ENCODE measurements at regions of chr17 and their contacts with region 1.

Region 1: GRCh38 chr17:10127819-10128425 is 70.5 kb downstream of the GAS7 start:
- DNase-seq: peak; percentile 91 to 97 (median 95)
- ATAC-seq: peak; percentile 93 to 94
- H3K4me3 ChIP-seq: no peak overlapping the region
- H3K27ac ChIP-seq: peak overlapping the region; percentile 49
- H3K4me1 ChIP-seq: peaks cover 14% of the 10 kb centered on the region
- H3K27me3 ChIP-seq: no peaks in the 10 kb centered on the region

Region 2: DNA sequence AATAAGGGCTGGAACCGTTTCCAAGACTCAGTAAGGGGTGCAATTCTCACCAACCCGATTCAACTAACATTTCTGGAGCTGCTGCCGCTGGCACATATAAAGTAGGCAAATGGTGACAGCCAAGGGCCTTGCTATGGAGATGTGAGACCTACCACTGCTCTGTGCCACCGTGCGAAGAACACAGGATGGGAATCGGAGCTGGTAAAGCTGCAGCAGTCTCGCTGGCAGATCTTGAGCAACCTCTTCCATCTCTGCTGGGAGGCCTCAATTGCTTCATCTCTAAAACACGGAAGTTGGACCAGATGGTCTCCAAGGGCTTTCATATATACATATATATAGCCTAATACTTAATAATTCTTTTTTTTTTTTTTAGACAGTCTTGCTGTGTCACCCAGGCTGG is 94.0 kb before region 1 on chr17:
- intact Hi-C with region 1: loop called in 2 of 4 experiments (anchors 10 kb)
- DNase-seq: peak in 1 of 3 donors; percentile 70
- ATAC-seq: no peak
- H3K4me3 ChIP-seq: peak overlapping the region; percentile 43
- H3K27ac ChIP-seq: peak overlapping the region; percentile 8
- H3K4me1 ChIP-seq: peaks cover 7% of the 10 kb centered on the region
- H3K27me3 ChIP-seq: no peaks in the 10 kb centered on the region

Region 3: DNA sequence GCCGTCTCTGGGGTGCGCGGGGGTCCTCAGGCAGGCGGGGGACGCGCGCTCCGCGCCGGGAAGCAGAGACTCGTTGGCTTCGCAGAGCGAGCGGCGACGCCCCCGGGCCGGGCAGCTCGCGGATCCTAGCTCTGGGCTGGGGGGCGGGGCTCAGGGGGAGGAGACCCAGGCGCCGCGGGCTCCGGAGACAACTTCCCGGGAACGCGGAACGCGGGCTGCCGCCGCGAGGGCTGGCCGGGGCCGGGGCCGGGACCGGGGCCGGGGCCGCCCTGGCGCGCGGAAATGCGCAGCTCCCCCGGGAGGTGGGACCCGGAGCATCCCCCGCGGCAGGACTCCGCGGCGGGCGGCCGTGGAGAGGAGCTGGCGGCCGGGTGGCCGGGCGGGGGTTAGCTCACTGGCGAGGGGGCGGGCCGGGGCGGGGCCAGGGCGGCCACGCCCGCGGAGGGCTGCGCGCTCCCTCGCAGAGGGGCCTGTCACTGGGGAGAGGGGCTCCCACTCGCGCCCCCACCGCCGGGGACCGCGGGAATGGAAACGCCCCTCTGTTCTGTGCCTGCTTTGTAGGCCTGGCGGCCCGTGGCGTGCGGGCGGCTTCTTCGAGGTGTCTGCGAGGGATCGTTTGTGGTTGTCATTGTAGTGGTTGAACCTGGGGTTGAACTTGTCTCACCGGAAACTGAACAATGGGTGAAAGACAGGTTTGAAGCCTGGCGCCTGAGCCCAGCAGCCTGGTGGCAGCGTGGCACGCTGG is 70.8 kb after region 1 on chr17 and contains the start of gene GAS7:
- intact Hi-C with region 1: loop called in 1 of 4 experiments (anchors 10 kb)
- DNase-seq: peak; percentile 78 to 93 (median 91)
- ATAC-seq: peak; percentile 77 to 82
- H3K4me3 ChIP-seq: peak within 1 kb of the TSS; percentile 70
- H3K27ac ChIP-seq: no peak within 1 kb of the TSS
- H3K4me1 ChIP-seq: no peaks in the 10 kb centered on the region
- H3K27me3 ChIP-seq: no peaks in the 10 kb centered on the region
- total RNA-seq, gene GAS7: 68.1 to 200 (median 122) TPM

Region 4: GRCh38 chr17:10295728-10296343 is 167.9 kb after region 1 on chr17:
- intact Hi-C with region 1: no loop called
- DNase-seq: peak; percentile 49 to 71 (median 66)
- ATAC-seq: peak; percentile 56 to 66
- H3K4me3 ChIP-seq: no peak overlapping the region
- H3K27ac ChIP-seq: no peak overlapping the region
- H3K4me1 ChIP-seq: no peaks in the 10 kb centered on the region
- H3K27me3 ChIP-seq: no peaks in the 10 kb centered on the region